ENCODE measurements at regions of chr2 and their contacts with region 1.

Region 1: DNA sequence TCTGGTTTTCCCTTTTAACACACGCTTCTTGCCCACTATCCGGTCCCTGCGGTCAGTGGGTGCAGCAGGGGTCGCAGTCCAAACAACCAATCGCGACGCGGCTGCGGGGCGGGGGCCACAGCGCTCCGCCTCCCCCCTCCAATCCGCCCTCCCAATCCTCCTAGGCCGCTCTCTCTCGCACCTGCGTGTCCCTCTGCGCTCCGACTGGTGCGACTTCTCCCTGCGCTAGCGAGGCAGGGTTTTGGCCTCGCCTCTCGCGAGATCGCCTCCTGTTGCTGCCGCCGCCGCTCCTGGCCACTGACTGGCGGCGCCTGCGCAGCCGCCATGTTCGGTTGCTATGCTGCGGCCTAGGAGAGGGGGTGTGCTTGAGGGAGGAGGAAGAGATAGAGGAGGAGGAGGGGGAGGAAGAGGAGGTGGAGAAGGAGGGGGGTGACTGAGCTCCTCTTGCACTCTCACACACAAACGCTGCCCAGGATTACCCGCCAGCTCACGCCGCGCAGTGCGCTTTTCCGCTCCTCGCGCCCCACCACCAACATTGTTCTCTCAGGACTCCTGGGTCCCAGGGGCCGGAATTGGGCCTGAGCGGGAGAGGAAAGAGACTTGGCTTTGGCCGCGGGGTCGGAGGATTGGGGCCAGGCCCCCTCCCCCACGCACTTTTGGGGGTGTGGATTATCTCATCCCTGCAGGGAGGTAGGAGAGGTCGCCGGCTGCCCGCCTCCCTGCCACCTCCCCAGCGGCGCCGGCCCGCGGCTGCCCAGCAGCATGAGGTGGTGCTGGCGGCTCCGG is at the start of gene PTPN4:
- DNase-seq: peak; percentile 88 to 98 (median 96)
- ATAC-seq: peak; percentile 97
- H3K4me3 ChIP-seq: peak within 1 kb of the TSS; percentile 89
- H3K4me3 Mint-ChIP-seq: peak within 1 kb of the TSS; percentile 87 to 97 (median 94)
- H3K27ac ChIP-seq: peak within 1 kb of the TSS; percentile 83
- H3K27ac Mint-ChIP-seq: peak within 1 kb of the TSS; percentile 60 to 95 (median 91)
- H3K4me1 ChIP-seq: peaks cover 25% of the 10 kb centered on the region in 2 donors
- H3K4me1 Mint-ChIP-seq: peaks cover 22 to 51% (median 39%) of the 10 kb centered on the region in 7 donors
- H3K27me3 ChIP-seq: no peaks in the 10 kb centered on the region
- H3K27me3 Mint-ChIP-seq: peaks cover 0 to 2% (median 0%) of the 10 kb centered on the region in 5 donors
- total RNA-seq, gene PTPN4: 59.9 to 122 (median 104) TPM

Region 2: DNA sequence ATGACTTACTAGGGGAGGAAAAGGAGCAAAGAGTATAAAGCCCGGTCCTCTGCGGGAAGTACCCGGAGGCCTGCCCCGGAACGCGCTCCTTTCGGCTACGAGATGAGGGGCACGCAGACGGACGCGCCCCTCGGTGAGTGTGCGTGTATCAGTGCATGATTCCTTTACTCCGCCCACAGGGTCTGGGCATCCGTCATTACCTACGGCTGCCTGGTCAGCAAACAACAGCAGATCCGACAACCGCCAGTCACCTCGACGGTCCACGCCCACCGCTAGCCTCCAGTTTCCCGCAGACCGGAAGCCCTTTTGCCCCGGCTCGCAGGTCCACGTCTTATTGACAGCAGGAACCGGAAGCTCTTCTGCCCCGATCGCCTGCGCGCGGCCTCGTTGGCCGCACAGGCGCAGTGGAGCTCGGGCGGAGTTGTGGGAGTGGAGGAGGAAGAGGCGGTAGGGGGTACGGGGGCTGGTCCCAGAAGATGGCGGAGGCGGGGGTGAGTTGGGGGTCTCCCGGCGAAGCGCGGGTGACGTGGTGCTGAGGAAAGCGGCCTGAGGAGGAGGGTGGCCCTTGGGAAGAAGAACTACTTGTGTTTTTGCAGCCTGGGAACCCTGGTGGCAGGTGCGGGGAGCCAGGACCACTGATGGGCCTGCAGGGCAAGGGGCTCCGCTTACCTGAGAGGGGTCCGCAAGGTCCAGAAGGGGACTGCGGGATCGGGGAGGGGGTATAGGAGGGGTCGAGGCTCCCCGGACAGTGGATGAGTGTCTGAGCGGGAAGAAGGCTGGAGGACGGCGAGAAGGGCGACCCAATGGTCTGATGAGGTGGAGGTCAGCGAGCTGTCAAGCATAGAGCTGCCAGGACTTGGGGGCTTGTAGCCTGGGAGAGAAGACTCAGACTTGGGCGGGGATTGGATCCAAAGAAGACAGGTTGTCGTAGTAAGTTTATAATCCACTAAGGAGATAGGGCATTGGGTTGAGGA is 1671.3 kb before region 1 on chr2 and contains the start of gene INSIG2:
- CTCF ChIA-PET with region 1: no interaction called
- POLR2A ChIA-PET with region 1: no interaction called
- intact Hi-C with region 1: loop called (anchors 2 kb)
- DNase-seq: peak; percentile 77 to 92 (median 81)
- ATAC-seq: peak; percentile 93
- H3K4me3 ChIP-seq: peak within 1 kb of the TSS; percentile 92
- H3K4me3 Mint-ChIP-seq: peak within 1 kb of the TSS; percentile 63 to 96 (median 92)
- H3K27ac ChIP-seq: peak within 1 kb of the TSS; percentile 87
- H3K27ac Mint-ChIP-seq: peak within 1 kb of the TSS; percentile 70 to 97 (median 91)
- H3K4me1 ChIP-seq: peaks cover 0 to 7% of the 10 kb centered on the region in 2 donors
- H3K4me1 Mint-ChIP-seq: peaks cover 6 to 37% (median 24%) of the 10 kb centered on the region in 7 donors
- H3K27me3 ChIP-seq: no peaks in the 10 kb centered on the region
- H3K27me3 Mint-ChIP-seq: peaks cover 0 to 12% (median 0%) of the 10 kb centered on the region in 5 donors
- total RNA-seq, gene INSIG2: 8.5 to 31.5 (median 20.3) TPM

Region 3: DNA sequence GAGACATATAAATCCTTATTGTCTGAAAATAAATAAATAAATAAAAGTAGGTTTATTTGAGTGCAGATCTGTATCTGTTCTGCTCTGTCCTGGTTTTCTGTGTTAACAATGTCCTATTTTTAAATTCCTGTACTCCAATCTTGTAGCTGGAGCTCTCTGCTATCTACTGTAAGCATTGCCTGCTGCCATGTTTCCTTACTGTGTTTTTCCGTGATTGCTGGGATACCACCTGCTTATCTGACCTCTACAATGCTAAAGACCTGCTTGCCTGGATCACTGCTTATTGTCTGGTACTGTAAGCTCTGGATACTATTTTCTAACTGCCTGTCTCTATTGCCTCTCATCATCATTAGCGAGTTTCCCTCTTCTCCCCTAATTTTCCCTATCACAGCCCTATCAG is 11.7 kb after region 1 on chr2:
- CTCF ChIA-PET with region 1: interaction called, 3 read pairs
- POLR2A ChIA-PET with region 1: interaction called, 25 read pairs
- intact Hi-C with region 1: loop called in 1 of 2 experiments (anchors 1 kb)
- DNase-seq: no peak
- ATAC-seq: no peak
- H3K4me3 ChIP-seq: no peak overlapping the region
- H3K4me3 Mint-ChIP-seq: peak overlapping the region in 5 of 10 donors; percentile 22 to 55 (median 47)
- H3K27ac ChIP-seq: no peak overlapping the region
- H3K27ac Mint-ChIP-seq: peak overlapping the region in 7 of 9 donors; percentile 2 to 92 (median 8)
- H3K4me1 ChIP-seq: peaks cover 9 to 46% of the 10 kb centered on the region in 2 donors
- H3K4me1 Mint-ChIP-seq: peaks cover 12 to 56% (median 43%) of the 10 kb centered on the region in 7 donors
- H3K27me3 ChIP-seq: no peaks in the 10 kb centered on the region
- H3K27me3 Mint-ChIP-seq: no peaks in the 10 kb centered on the region

Region 4: DNA sequence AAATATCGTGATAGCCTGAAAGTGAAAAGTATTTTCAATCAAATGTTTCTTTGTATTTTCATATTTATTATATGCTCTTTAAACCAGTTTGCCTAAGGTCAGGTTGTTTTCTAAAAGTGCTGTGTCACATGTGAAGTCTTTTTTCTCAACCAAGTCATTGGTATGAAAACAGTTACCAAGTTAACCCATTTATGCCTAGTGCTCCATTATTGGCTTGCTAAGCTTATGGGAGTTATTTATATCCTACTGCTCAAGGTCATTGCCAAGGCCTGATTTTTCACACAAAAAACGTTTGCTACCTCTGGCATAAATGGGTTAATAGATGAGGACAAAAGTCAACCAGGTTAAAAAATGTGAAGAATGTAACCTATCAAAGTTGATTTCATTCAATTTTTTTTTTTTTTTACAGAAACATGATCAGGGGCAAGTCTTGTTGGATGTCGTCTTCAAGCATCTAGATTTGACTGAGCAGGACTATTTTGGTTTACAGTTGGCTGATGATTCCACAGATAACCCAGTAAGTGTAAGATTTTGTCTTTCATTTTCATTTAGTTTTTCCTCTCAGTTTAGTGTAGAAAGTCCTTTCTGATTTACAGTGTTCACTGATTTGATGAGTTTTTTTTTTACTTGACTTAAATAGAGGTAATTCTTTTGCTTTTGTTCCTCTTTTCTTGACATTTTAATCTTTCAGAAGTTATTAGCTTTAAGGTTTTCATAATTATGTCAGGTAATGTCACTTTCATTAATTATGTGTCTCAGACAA is 102.7 kb after region 1 on chr2:
- CTCF ChIA-PET with region 1: no interaction called
- POLR2A ChIA-PET with region 1: no interaction called
- intact Hi-C with region 1: loop called in 1 of 2 experiments (anchors 1 kb)
- DNase-seq: no peak
- ATAC-seq: no peak
- H3K4me3 ChIP-seq: no peak overlapping the region
- H3K4me3 Mint-ChIP-seq: peak overlapping the region in 2 of 10 donors; percentile 36 to 55
- H3K27ac ChIP-seq: no peak overlapping the region
- H3K27ac Mint-ChIP-seq: peak overlapping the region in 2 of 9 donors; percentile 37 to 79
- H3K4me1 ChIP-seq: peaks cover 14 to 15% of the 10 kb centered on the region in 2 donors
- H3K4me1 Mint-ChIP-seq: peaks cover 36 to 91% (median 84%) of the 10 kb centered on the region in 7 donors
- H3K27me3 ChIP-seq: no peaks in the 10 kb centered on the region
- H3K27me3 Mint-ChIP-seq: no peaks in the 10 kb centered on the region

Region 5: GRCh38 chr2:120223034-120223912 is 463.6 kb after region 1 on chr2 and contains the start of gene TMEM185B:
- CTCF ChIA-PET with region 1: no interaction called
- POLR2A ChIA-PET with region 1: interaction called, 3 read pairs
- intact Hi-C with region 1: loop called (anchors 1 to 2 kb)
- DNase-seq: peak; percentile 83 to 96 (median 90)
- ATAC-seq: peak; percentile 97
- H3K4me3 ChIP-seq: peak within 1 kb of the TSS; percentile 74
- H3K4me3 Mint-ChIP-seq: peak within 1 kb of the TSS; percentile 83 to 91 (median 88)
- H3K27ac ChIP-seq: peak within 1 kb of the TSS; percentile 94
- H3K27ac Mint-ChIP-seq: peak within 1 kb of the TSS; percentile 85 to 92 (median 91)
- H3K4me1 ChIP-seq: peaks cover 20 to 23% of the 10 kb centered on the region in 2 donors
- H3K4me1 Mint-ChIP-seq: peaks cover 34 to 67% (median 56%) of the 10 kb centered on the region in 7 donors
- H3K27me3 ChIP-seq: no peaks in the 10 kb centered on the region
- H3K27me3 Mint-ChIP-seq: no peaks in the 10 kb centered on the region
- total RNA-seq, gene TMEM185B: 14.9 to 36.8 (median 19.5) TPM

Region 6: DNA sequence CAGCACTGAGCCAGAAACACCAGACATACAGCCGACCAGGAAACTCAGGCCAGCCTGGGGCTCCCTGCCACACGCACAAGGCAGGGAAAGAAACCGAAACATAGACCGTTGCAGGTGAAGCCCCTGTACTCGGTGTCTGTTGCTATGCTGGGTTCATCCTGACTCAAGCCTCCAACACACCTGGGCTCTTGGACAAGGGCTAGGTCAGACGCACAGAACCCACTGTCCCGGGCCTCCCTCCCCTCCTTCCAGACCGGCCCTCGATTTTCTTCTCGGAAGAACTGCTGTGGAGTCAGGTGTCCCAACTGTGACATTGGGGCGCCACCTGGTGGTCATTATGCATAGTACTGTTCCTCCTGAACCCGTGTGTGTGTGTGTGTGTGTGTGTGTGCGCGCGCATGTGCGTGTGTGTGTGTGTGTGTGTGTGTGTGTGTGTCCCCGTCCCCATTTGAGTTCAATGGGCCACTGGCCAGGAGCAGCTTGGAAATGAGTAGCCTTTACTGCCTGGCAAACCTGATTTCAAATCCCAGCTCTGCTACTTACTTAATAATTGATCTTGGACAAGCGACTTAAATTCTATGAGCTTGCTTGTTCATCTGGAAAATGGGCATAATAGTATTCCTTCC is 920.6 kb after region 1 on chr2:
- CTCF ChIA-PET with region 1: no interaction called
- POLR2A ChIA-PET with region 1: no interaction called
- intact Hi-C with region 1: loop called in 1 of 2 experiments (anchors 5 kb)
- DNase-seq: peak; percentile 44 to 65 (median 59)
- ATAC-seq: peak; percentile 83
- H3K4me3 ChIP-seq: no peak overlapping the region
- H3K4me3 Mint-ChIP-seq: peak overlapping the region in 6 of 10 donors; percentile 0 to 48 (median 21)
- H3K27ac ChIP-seq: no peak overlapping the region
- H3K27ac Mint-ChIP-seq: peak overlapping the region in 6 of 9 donors; percentile 45 to 80 (median 72)
- H3K4me1 ChIP-seq: peaks cover 4% of the 10 kb centered on the region in 2 donors
- H3K4me1 Mint-ChIP-seq: peaks cover 0 to 5% (median 0%) of the 10 kb centered on the region in 7 donors
- H3K27me3 ChIP-seq: no peaks in the 10 kb centered on the region
- H3K27me3 Mint-ChIP-seq: peaks cover 18 to 50% (median 31%) of the 10 kb centered on the region in 5 donors